ENCODE measurements at regions of chr9 and their contacts with region 1.

Region 1: GRCh38 chr9:130940693-130941576 is 1.9 kb upstream of the FIBCD1 start:
- DNase-seq: no peak
- H3K4me3 ChIP-seq: no peak overlapping the region
- H3K27ac ChIP-seq: no peak overlapping the region
- H3K4me1 ChIP-seq: peaks cover 31% of the 10 kb centered on the region
- H3K27me3 ChIP-seq: peaks cover 16% of the 10 kb centered on the region
- CTCF ChIP-seq: peak; percentile 55 to 84 (median 75)
- POLR2A ChIP-seq: no peak

Region 2: GRCh38 chr9:130707225-130707976 is 233.5 kb before region 1 on chr9:
- intact Hi-C with region 1: loop called (anchors 5 kb)
- DNase-seq: no peak
- H3K4me3 ChIP-seq: no peak overlapping the region
- H3K27ac ChIP-seq: no peak overlapping the region
- H3K4me1 ChIP-seq: peaks cover 4% of the 10 kb centered on the region
- H3K27me3 ChIP-seq: no peaks in the 10 kb centered on the region
- CTCF ChIP-seq: peak; percentile 48 to 71 (median 54)
- POLR2A ChIP-seq: no peak

Region 3: DNA sequence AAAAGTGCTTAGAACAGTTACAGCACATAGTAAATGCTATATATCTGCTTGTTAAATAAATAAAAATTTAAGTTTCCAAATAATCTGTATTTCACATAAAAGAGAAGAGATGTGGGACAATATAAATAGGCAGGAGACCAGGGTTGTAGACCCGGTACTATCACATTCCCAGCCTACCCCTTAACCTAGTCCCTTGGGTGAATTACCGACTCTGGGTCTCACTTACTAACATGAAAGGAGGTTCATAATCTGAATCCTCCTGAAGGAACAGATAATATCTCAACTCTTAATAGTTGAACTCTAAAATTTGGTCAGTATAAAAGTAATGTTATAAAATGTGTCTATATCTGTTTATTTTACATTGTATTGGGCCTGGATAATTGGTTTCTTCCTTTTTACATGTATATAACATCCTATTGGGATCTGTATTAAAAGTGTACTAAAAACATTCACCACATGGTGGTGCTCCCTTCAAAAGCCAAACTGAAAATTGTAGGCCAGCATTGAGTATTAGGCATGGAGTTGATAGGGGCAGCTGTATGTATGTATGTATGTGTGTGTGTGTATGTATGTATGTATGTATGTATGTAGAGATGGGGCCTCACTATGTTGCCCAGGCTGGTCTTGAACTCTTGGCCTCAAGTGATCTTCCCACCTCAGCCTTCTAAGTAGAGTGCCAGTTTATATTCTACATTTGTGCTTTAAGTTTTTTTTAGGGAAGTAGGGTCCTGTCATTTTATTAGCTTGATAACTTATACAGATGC is 170.1 kb before region 1 on chr9:
- intact Hi-C with region 1: loop called (anchors 5 kb)
- DNase-seq: no peak
- H3K4me3 ChIP-seq: no peak overlapping the region
- H3K27ac ChIP-seq: no peak overlapping the region
- H3K4me1 ChIP-seq: peaks cover 11% of the 10 kb centered on the region
- H3K27me3 ChIP-seq: no peaks in the 10 kb centered on the region
- CTCF ChIP-seq: peak; percentile 51 to 76 (median 70)
- POLR2A ChIP-seq: no peak

Region 4: GRCh38 chr9:130866474-130866965 is 74.4 kb before region 1 on chr9:
- intact Hi-C with region 1: loop called (anchors 10 kb)
- DNase-seq: no peak
- H3K4me3 ChIP-seq: no peak overlapping the region
- H3K27ac ChIP-seq: no peak overlapping the region
- H3K4me1 ChIP-seq: peaks cover 40% of the 10 kb centered on the region
- H3K27me3 ChIP-seq: no peaks in the 10 kb centered on the region
- CTCF ChIP-seq: peak; percentile 61 to 74 (median 67)
- POLR2A ChIP-seq: no peak